GM13976 (cell line): ENCODE measurements at regions of chr4 and their contacts with region 1.

Region 1: GRCh38 chr4:6250235-6250983 is 19.2 kb upstream of the WFS1 start:
- DNase-seq: peak; percentile 82
- CTCF ChIP-seq: peak; percentile 67

Region 2: DNA sequence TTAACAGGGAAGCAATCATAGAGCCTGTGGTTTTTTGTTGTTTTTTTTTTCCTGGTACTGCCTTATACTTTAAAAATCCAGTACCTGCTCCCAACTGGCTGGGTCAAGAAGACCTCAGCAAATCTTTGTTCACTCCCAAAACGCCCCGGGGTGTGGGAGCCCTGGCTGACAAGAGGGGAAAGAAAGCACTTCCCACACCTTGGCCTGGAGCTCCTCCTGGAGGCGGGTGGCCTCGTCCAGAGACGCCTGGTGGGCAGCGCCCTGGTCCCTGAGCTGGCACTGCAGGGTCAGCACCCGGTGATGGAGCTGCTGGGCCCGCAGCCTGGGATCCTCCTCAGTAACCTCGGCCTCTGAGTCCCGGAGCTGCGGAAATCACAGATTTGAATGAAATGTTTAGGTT is 270.4 kb before region 1 on chr4:
- in situ Hi-C with region 1: no loop called
- DNase-seq: no peak
- CTCF ChIP-seq: peak; percentile 19

Region 3: GRCh38 chr4:6327041-6327917 is 76.9 kb after region 1 on chr4:
- in situ Hi-C with region 1: loop called (anchors 5 kb)
- DNase-seq: peak; percentile 91
- CTCF ChIP-seq: peak; percentile 95